Activated CD8-positive, alpha-beta T cell treated with anti-CD3 and anti-CD28 coated beads, Interleukin-2, amount 10 ng/mL, durations not matched to agents 7 days and 5 days (primary cell): ENCODE measurements at regions of chr11 and their contacts with region 1.

Region 1: DNA sequence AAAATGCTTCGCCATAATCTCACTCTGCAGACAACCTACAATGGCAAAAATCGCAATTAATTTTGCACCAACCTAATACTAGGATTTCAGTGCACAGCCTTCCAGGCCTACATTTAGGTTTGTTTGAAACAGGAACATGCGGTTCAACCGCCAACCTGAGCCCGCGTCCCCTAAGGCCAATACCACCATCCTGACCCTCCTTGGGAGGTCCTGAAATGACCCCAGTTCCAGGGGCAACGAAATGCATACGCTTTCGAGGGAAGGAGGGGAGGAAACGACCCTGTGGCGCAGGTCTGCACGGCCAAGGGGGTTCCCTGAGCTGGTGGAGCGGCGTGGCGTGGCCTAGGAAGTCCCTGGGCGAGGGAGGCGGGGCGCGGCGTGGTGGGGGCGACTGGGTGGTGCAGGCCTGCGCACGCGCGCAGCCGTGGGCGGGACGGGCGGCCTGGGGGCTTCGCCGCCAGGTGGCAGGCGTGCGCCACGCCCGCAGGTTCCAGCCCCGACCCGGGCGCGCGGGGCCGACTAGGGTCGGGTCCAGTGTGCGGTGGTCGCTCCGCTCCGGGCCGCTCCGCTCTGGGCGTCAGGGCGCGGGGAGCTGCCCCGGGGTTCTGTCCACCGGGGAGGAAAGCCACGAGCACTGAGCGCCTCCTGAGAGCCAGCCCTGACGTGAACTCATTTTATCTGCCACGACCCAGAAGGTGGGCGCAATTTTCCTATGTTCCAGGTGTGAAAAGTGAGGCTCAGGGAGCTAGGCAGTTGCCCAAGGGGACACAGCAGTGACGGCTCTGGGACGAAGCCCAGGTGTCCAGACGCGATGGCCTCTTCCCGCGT is 94.1 kb downstream of the SWAP70 start:
- DNase-seq: peak; percentile 92
- ATAC-seq: peak; percentile 85
- H3K4me3 Mint-ChIP-seq: peak overlapping the region; percentile 74
- H3K27ac Mint-ChIP-seq: peak overlapping the region; percentile 79
- H3K4me1 Mint-ChIP-seq: peaks cover 40% of the 10 kb centered on the region
- H3K27me3 Mint-ChIP-seq: no peaks in the 10 kb centered on the region

Region 2: DNA sequence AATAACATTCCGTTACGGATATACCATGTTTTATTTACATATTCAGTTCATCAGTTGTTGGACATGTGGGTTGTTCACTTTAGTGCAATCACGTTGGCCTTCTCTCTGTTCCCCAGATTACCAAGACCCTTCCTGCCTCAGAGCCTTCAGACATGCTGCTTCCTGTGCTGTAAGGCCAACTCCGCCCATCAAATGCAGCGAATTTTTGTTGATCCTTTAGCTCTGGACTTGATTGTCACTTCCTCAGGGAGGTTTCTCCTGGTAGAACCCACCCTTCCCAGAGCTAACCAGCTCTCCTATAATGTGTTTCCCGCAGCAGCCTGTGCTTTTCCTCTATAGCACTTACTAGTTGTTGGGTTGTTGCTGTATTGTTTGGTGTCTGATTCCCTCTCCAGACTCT is 54.7 kb before region 1 on chr11:
- CTCF ChIA-PET with region 1: no interaction called
- POLR2A ChIA-PET with region 1: no interaction called
- DNase-seq: no peak
- ATAC-seq: no peak
- H3K4me3 Mint-ChIP-seq: no peak overlapping the region
- H3K27ac Mint-ChIP-seq: no peak overlapping the region
- H3K4me1 Mint-ChIP-seq: peaks cover 28% of the 10 kb centered on the region
- H3K27me3 Mint-ChIP-seq: no peaks in the 10 kb centered on the region

Region 3: DNA sequence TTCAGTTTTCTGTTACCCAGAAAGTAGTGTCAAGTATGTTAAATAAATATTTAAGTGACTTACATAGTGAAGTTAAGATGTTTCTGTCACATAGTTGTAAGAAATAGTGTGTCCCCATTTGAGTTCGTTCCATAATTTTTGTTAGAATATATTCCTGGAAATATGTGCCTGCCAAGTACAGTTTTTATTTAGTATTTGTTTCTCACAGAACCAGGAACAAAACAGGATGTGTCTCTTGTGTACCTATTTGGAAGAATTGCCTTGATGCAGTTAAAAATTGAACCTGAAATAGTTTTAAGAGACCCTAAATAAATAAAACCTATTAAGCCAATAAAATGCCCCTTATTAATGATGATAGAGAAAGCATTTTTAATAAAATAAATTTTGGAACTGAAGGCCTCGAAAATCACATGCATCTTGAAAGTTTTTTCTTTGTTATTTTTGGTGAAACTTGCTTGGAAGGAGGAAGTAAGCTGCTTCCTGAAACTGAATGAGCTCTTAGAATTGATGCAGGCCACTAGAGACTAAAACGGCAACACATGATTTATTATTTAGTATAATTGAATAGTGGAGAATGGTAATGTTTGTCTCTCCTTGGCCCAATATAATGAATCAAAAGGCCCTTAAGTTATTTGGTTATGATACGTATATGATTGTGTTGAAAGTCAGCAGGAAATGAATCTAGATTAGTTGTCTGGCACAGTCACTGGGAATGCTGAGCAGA is 38.3 kb before region 1 on chr11:
- CTCF ChIA-PET with region 1: no interaction called
- POLR2A ChIA-PET with region 1: no interaction called
- DNase-seq: no peak
- ATAC-seq: no peak
- H3K4me3 Mint-ChIP-seq: no peak overlapping the region
- H3K27ac Mint-ChIP-seq: peak overlapping the region; percentile 61
- H3K4me1 Mint-ChIP-seq: peaks cover 21% of the 10 kb centered on the region
- H3K27me3 Mint-ChIP-seq: no peaks in the 10 kb centered on the region

Region 4: DNA sequence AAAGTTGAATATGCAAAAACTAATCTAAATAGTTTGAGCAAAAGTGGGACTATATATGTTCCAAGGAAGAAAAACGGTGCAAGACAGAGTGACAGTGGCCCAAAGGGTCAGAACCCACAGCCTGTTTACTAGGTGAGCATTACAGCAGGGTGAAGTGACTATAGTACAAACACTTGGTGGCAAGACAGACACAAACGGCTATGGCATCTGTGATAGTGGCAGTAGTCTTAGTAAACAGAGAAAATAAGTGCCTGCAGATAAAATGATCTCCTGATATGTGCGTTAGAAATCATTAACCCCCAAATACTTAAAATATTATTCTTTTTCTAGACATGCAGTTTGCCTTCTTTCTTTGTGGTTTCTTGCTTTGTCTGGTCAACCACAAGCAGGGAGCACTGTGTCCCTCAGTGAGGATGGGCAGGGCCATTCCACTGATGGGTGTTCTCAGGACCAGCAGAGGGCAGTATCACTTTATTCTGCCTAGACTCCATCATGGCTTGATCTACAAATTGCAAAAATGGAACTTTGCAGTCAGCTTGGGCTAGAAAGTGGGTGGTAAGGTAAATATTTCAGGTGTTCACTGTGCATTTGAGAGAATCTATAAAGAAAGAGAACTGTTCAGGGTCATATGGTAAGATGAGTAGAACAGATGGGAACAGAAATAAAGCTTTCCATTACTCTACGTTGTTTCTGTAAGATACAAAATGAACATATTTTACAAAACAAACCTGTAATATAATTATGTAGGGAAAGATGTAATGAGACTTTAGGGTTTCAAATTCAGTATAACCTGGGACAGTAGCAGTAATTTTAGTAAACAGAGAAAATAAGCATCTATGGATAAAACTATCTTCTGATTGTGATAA is 104.1 kb after region 1 on chr11:
- CTCF ChIA-PET with region 1: interaction called, 30 read pairs
- POLR2A ChIA-PET with region 1: interaction called, 3 read pairs
- DNase-seq: peak; percentile 69
- ATAC-seq: peak; percentile 82
- H3K4me3 Mint-ChIP-seq: no peak overlapping the region
- H3K27ac Mint-ChIP-seq: no peak overlapping the region
- H3K4me1 Mint-ChIP-seq: peaks cover 36% of the 10 kb centered on the region
- H3K27me3 Mint-ChIP-seq: no peaks in the 10 kb centered on the region

Region 5: GRCh38 chr11:9972989-9973388 is 215.0 kb after region 1 on chr11:
- CTCF ChIA-PET with region 1: interaction called, 42 read pairs
- POLR2A ChIA-PET with region 1: interaction called, 3 read pairs
- DNase-seq: peak; percentile 44
- ATAC-seq: peak; percentile 60
- H3K4me3 Mint-ChIP-seq: no peak overlapping the region
- H3K27ac Mint-ChIP-seq: no peak overlapping the region
- H3K4me1 Mint-ChIP-seq: peaks cover 3% of the 10 kb centered on the region
- H3K27me3 Mint-ChIP-seq: no peaks in the 10 kb centered on the region

Region 6: DNA sequence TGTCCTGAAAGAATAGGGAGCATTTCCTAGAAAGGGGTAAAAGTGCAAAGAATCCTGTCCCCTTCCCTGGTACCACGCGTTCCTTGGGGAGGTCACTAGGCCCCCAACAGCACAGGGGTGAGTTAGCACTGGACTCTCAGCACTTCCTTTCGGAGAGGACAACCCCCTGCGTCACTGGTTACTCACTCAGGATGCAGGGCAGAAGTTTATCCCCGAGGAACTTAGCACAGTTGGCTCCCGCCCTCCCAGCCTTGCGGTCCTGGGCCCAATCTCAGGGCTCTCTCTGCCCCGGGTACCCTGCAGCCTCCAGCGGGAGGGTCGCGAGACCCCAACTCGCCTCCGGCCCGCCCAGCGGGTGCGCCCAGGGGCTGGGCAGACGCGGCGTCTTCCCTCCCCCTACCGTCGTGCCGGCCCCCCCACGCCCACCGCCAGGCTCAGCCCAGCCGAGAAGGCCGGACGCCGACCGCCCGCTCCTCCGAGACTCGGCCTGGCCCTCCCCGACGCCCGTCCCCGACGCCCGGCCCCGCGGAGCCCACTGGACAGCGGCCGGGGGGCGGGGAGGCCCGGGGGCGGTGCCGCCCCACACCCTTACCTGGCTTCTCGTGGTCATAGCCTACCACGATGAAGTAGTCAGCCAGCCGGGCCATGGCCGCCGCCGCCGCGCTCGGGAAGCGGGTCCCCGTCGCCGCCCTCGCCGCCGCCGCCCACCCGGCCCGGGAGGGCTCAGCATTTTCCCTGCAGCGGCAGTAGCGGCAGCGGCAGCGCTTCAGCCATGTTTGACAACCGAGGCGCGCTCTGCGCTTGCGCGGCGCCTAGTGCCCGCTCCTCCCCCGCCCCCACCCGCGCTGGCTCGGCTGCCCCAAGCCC is 535.6 kb after region 1 on chr11 and contains the start of gene SBF2:
- CTCF ChIA-PET with region 1: interaction called, 10 read pairs
- POLR2A ChIA-PET with region 1: no interaction called
- DNase-seq: peak; percentile 80
- ATAC-seq: peak; percentile 74
- H3K4me3 Mint-ChIP-seq: peak within 1 kb of the TSS; percentile 68
- H3K27ac Mint-ChIP-seq: no peak within 1 kb of the TSS
- H3K4me1 Mint-ChIP-seq: peaks cover 25% of the 10 kb centered on the region
- H3K27me3 Mint-ChIP-seq: peaks cover 50% of the 10 kb centered on the region
- total RNA-seq, gene SBF2: 5.1 to 5.9 TPM

Region 7: DNA sequence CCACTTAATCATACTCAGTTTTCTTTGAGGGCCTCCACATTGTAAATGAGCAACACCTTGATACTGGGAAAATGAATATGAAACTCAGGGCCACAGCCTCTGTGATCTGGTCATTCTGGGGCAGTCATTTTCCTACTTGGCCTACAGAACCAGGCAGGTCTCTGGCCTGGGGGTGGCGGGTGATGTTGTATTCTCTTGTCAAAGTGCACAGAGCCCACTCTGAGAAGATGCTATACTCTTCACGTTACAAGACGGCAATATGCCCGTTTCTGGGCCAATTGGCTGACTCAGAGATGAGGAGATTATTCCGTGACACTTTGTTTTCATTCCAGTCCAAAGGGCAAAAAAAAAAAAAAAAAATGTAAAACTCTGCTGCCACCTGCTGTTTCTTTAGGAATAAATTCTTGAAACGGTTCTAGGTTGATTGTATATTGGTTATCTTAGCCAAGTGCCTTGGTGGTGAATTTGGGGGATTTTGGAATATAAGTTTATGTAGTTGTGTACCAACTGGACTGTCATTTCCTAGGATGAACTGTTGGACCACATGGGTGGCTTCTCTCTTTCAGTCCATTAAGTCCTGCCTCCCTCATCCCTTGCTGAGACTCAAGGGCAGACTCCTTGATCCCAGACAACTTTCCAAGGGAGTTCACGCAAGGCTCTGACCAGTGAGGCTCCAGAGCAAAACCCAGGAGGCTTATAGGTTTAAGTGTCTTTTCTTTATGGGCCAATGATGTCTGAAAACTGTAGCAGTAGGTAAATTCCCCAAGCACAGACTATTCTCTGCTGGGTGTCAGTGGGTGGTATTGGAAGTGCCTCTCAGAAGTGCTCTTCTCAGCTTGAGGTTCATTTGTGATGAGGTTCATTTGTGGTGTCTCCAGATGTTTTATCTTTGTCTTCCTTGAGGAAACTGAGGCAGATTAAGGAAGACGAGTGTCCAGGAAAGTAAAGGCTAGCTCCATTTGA is 565.1 kb after region 1 on chr11:
- CTCF ChIA-PET with region 1: interaction called, 24 read pairs
- POLR2A ChIA-PET with region 1: no interaction called
- DNase-seq: peak; percentile 50
- ATAC-seq: peak; percentile 71
- H3K4me3 Mint-ChIP-seq: no peak overlapping the region
- H3K27ac Mint-ChIP-seq: no peak overlapping the region
- H3K4me1 Mint-ChIP-seq: peaks cover 6% of the 10 kb centered on the region
- H3K27me3 Mint-ChIP-seq: peaks cover 8% of the 10 kb centered on the region

Region 8: DNA sequence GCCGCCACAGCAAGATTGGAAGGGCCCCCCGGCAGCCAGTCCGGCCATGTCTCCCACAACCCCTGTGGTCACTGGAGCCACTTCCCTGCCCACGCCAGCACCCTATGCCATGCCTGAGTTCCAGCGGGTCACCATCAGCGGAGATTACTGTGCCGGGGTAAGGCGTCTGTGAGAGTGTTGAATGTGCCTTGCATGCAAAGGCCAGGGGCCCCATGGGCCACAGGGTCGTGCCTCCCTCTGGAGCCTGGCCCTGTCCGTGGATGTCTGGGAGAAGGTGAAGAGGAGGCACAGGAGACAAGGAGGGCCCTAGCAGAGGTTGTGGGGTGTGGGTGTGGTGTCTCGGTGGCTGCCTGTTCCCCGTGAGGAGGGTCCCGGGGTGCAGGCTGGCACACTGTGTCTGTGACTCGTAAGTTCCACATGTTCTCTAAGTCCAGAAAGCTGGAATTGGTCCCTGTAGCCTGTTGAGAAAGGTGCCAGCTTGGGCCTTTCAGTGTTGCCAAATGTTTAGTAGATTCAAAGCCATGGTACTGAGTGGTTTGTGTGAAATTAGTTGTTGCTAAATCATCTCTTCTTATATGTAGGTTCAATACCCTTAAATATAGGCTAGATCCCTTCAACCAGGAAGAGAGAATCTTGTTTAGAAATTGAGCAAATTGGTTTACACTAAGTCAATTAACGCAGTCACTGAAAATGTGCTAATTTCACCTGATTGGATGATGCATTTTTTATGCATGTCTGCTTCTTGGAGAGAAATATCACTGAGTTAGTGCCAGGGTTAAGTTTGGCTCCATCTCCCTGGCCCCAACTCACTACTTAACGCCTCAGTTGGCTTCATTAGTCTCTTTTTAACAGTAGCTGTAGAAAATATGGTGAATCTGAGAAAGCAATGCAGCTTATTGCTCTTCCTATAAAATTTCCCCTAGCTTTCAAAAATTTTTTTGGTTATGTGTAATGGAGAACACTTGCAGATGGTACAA is 720.8 kb after region 1 on chr11:
- CTCF ChIA-PET with region 1: no interaction called
- POLR2A ChIA-PET with region 1: no interaction called
- DNase-seq: no peak
- ATAC-seq: no peak
- H3K4me3 Mint-ChIP-seq: no peak overlapping the region
- H3K27ac Mint-ChIP-seq: no peak overlapping the region
- H3K4me1 Mint-ChIP-seq: peaks cover 4% of the 10 kb centered on the region
- H3K27me3 Mint-ChIP-seq: no peaks in the 10 kb centered on the region